CD14-positive monocyte (primary cell): ENCODE measurements at regions of chr10 and their contacts with region 1.

Region 1: DNA sequence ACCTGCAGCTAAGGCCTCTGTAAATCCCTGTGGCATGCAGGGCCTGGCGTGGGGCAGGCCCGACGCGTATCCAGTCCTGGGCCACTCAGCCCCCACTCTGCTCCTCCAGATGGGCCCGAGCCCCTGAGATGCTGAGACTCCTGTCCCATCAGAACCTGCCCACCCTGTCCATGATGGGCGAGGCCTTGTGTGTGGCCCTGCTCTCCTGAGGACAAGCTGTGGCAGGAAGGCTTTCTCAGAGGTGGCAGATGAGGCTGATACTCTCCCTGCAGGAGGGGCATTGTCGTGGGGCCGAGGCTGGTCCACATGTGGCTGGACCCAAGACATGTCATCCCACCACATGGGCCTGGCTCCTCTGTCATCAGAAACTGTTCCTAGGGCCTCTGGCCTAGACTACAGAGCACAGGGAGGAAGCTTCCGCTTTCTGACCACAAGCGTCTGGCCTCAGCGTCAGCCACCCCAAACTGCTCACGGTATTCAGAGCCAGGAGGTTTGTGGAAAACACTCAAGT is 6.0 kb downstream of the ALOX5 start:
- DNase-seq: peak; percentile 96 to 99 (median 97)
- H3K4me3 ChIP-seq: peak overlapping the region in 1 of 3 experiments; percentile 27
- H3K4me3 Mint-ChIP-seq: peak overlapping the region; percentile 62 to 76
- H3K27ac ChIP-seq: peak overlapping the region; percentile 93 to 100
- H3K27ac Mint-ChIP-seq: peak overlapping the region; percentile 97 to 99 (median 99)
- H3K4me1 ChIP-seq: peaks cover 97 to 98% of the 10 kb centered on the region in 2 donors
- H3K4me1 Mint-ChIP-seq: peaks cover 92% of the 10 kb centered on the region
- H3K27me3 ChIP-seq: no peaks in the 10 kb centered on the region
- H3K27me3 Mint-ChIP-seq: peaks cover 0 to 2% (median 0%) of the 10 kb centered on the region in 3 donors
- CTCF ChIP-seq: no peak

Region 2: DNA sequence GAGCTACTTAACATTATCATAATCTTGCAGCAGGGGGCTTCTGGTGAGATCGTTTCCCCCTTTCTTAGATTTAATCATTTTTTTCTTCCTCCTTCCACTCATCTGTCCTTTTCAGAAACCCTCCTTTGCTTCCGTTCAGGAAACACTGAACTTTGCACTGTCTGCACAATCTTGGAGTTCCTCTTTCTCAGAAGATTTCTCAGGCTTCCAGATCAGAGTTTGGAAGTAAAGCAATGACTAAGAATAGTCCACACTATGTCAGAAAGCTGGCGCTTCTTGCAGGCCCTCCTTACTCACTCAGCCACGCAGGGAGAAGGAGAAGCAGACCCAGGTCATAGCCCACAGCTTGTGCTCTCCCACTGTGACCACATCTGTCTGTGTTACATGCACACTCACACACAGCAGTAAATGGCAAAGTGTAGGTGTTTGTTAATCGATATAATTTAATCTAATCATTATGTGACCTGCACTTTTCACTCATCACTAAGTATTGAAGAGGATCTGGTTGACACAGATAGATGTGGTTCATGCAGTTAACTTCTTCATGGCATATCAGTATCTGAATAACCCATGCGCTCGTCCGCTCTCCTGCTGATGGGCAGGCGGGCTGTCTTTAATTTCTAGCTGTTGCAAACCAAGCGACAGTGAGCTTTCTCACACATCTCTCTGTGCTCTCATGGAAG is 24.2 kb after region 1 on chr10:
- intact Hi-C with region 1: loop called in 1 of 2 experiments (anchors 2 kb)
- DNase-seq: peak; percentile 84 to 93 (median 90)
- H3K4me3 ChIP-seq: peak overlapping the region in 1 of 3 experiments; percentile 44
- H3K4me3 Mint-ChIP-seq: peak overlapping the region in 1 of 2 donors; percentile 47
- H3K27ac ChIP-seq: peak overlapping the region; percentile 66 to 88
- H3K27ac Mint-ChIP-seq: peak overlapping the region; percentile 63 to 89 (median 87)
- H3K4me1 ChIP-seq: peaks cover 53 to 58% of the 10 kb centered on the region in 2 donors
- H3K4me1 Mint-ChIP-seq: peaks cover 78% of the 10 kb centered on the region
- H3K27me3 ChIP-seq: no peaks in the 10 kb centered on the region
- H3K27me3 Mint-ChIP-seq: peaks cover 0 to 2% (median 0%) of the 10 kb centered on the region in 3 donors
- CTCF ChIP-seq: no peak

Region 3: DNA sequence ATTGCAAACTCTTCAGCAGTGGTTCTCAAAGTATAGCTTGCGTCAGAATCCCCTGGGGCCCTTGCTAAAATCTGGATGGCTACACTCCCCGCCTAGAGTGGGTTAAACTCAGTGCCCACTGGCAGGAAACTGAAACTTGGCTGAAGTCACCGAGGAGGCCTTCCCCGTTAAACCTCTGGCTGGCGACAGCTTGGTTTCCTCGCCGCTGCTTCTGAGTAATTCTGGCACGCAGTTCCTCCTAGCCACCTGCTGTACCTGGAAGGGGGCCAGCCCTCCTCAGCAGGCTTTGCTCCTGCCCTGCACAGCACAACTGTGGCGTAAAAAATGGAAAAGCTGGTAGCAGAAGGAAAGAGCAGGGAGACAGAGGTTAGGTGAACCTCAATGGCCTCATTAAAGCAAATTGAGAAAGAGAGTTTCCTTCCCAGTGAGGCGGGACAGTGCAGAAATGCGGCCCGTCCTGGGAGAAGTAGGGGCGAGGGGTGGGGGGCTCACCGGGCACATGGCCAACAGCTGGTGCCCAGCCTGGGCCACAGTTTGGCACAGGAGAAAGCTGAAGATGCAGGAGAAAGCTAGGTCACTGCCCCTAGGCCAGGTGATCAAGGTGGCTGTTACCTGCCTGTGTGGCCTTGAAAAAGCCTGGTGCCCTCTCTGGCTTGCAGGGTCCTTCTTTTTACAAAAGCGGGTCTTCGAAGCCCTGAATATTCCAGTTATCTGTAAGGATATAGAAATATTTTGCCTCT is 40.6 kb after region 1 on chr10:
- intact Hi-C with region 1: loop called (anchors 2 to 5 kb)
- DNase-seq: peak; percentile 48 to 67 (median 62)
- H3K4me3 ChIP-seq: peak overlapping the region in 2 of 3 experiments; percentile 6 to 79
- H3K4me3 Mint-ChIP-seq: peak overlapping the region; percentile 89 to 96
- H3K27ac ChIP-seq: peak overlapping the region; percentile 68 to 92
- H3K27ac Mint-ChIP-seq: peak overlapping the region; percentile 93 to 97 (median 95)
- H3K4me1 ChIP-seq: peaks cover 83 to 94% of the 10 kb centered on the region in 2 donors
- H3K4me1 Mint-ChIP-seq: peaks cover 93% of the 10 kb centered on the region
- H3K27me3 ChIP-seq: no peaks in the 10 kb centered on the region
- H3K27me3 Mint-ChIP-seq: peaks cover 0 to 2% (median under 1%) of the 10 kb centered on the region in 3 donors
- CTCF ChIP-seq: no peak

Region 4: DNA sequence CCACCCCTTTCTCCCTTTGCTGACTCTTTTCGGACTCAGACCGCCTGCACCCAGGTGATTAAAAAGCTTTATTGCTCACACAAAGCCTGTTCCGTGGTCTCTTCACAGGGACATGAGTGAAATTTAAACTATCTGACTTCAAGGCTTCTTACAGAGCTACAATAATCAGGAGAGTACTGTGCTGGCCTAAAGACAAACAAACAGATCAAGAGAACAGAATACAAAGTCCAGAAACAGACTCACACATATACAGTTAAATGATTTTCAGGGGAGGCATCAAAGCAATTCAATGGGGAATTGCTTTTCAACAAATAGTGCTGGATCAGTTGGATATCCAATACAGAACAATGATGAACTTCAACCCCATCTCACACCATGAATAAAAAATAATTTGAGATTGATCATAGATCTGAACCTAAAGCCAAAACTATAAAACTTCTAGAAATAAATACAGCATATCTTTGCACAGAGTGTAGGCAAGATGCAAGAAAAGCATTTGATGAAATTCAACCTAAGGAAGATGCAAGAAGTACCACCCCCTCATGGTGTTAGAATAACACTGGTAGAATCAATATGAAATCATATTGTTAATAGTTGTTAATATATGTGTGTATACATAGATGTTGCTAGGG is 196.1 kb after region 1 on chr10:
- intact Hi-C with region 1: no loop called
- DNase-seq: no peak
- H3K4me3 ChIP-seq: no peak overlapping the region
- H3K4me3 Mint-ChIP-seq: no peak overlapping the region
- H3K27ac ChIP-seq: no peak overlapping the region
- H3K27ac Mint-ChIP-seq: no peak overlapping the region
- H3K4me1 ChIP-seq: peaks cover 11 to 13% of the 10 kb centered on the region in 2 donors
- H3K4me1 Mint-ChIP-seq: peaks cover 21% of the 10 kb centered on the region
- H3K27me3 ChIP-seq: no peaks in the 10 kb centered on the region
- H3K27me3 Mint-ChIP-seq: peaks cover 0 to 3% (median 2%) of the 10 kb centered on the region in 3 donors
- CTCF ChIP-seq: no peak